CD4-positive, alpha-beta T cell (primary cell): ENCODE measurements at regions of chr10 and their contacts with region 1.

Region 1: GRCh38 chr10:71727738-71728737 is 8.5 kb upstream of the C10orf105 start:
- DNase-seq: peak; percentile 56 to 91 (median 73)
- ATAC-seq: peak; percentile 65
- H3K4me3 ChIP-seq: peak overlapping the region; percentile 10
- H3K4me3 Mint-ChIP-seq: peak overlapping the region; percentile 73
- H3K27ac ChIP-seq: peak overlapping the region; percentile 74 to 88
- H3K27ac Mint-ChIP-seq: peak overlapping the region; percentile 96
- H3K4me1 ChIP-seq: peaks cover 100% of the 10 kb centered on the region
- H3K4me1 Mint-ChIP-seq: peaks cover 79% of the 10 kb centered on the region
- H3K27me3 ChIP-seq: no peaks in the 10 kb centered on the region
- H3K27me3 Mint-ChIP-seq: no peaks in the 10 kb centered on the region
- CTCF ChIP-seq: no peak

Region 2: GRCh38 chr10:71684356-71685173 is 43.5 kb before region 1 on chr10:
- CTCF ChIA-PET with region 1: no interaction called
- POLR2A ChIA-PET with region 1: no interaction called
- intact Hi-C with region 1: no loop called
- DNase-seq: peak in 3 of 14 experiments; percentile 13 to 44 (median 32)
- ATAC-seq: no peak
- H3K4me3 ChIP-seq: no peak overlapping the region
- H3K4me3 Mint-ChIP-seq: no peak overlapping the region
- H3K27ac ChIP-seq: no peak overlapping the region
- H3K27ac Mint-ChIP-seq: no peak overlapping the region
- H3K4me1 ChIP-seq: peaks cover 4% of the 10 kb centered on the region
- H3K4me1 Mint-ChIP-seq: no peaks in the 10 kb centered on the region
- H3K27me3 ChIP-seq: no peaks in the 10 kb centered on the region
- H3K27me3 Mint-ChIP-seq: no peaks in the 10 kb centered on the region
- CTCF ChIP-seq: no peak

Region 3: DNA sequence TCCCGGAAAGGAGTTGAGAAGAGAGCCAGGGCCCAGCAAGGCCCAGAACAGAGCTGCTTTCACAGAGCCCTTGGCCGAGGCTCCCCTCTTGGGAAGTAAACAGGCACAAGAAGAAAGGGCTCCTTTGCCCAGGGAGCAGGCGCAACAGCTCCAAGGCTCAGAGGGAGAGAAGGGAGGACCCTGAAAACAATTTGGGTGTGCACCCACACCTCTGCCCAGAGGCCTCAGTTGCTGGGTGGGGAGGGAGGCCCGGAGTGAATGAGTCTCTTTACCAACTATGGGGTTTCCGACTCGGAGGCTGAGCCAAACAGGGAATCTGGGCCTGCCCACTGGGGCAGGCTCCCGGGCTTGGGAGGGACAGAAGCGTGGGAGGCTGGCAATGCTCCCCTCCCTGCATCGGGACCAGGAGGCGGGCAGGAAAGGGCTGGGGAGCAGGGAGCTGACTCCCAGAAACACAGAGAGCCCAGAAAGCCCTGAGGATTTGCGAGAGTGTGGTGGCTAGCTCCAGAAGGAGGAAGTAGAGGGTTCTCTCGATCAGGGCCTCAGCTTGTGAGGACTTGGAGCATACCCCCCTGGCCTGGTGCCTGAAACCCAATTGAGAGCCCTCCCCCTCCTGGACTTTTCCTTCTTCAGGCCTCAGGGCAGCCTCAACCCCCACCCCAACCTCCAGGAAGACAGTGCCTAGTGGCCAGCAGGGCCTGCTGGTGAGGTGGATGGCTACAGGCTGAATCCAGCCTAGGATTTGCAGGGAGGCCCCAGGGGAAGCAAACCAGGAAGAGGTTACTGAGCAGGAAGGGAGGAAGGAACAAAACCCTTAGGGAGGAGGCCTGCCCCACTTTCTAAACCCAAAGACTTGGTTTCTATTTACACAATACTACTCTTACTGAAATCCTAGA is 14.7 kb before region 1 on chr10:
- CTCF ChIA-PET with region 1: interaction called, 4 read pairs
- POLR2A ChIA-PET with region 1: interaction called, 39 read pairs
- intact Hi-C with region 1: no loop called
- DNase-seq: peak in 5 of 14 experiments; percentile 17 to 64 (median 54)
- ATAC-seq: peak; percentile 32
- H3K4me3 ChIP-seq: peak overlapping the region; percentile 39
- H3K4me3 Mint-ChIP-seq: peak overlapping the region; percentile 80
- H3K27ac ChIP-seq: peak overlapping the region; percentile 74 to 90
- H3K27ac Mint-ChIP-seq: peak overlapping the region; percentile 98
- H3K4me1 ChIP-seq: peaks cover 83% of the 10 kb centered on the region
- H3K4me1 Mint-ChIP-seq: peaks cover 74% of the 10 kb centered on the region
- H3K27me3 ChIP-seq: no peaks in the 10 kb centered on the region
- H3K27me3 Mint-ChIP-seq: no peaks in the 10 kb centered on the region
- CTCF ChIP-seq: no peak

Region 4: DNA sequence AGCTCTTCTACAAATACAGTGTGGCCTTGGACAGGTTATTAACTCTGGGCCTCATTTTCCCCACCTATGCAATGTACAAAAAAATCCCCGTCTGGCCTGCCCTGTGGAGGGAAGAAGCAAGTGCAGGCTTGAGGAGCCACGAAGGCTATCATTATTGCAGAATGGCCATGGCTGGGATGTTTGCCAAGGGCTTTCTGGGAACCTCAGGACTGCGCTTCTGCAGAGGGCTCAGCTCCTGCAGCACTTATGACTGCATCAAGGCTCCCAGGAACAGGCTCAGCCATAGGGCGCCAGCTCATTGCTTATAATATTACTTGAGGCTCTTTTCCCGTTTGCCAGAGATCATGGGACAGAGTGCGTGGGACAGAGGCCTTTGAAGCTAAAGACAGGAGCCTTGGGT is 12.0 kb after region 1 on chr10:
- CTCF ChIA-PET with region 1: interaction called, 3 read pairs
- POLR2A ChIA-PET with region 1: interaction called, 252 read pairs
- intact Hi-C with region 1: no loop called
- DNase-seq: no peak
- ATAC-seq: no peak
- H3K4me3 ChIP-seq: no peak overlapping the region
- H3K4me3 Mint-ChIP-seq: peak overlapping the region; percentile 77
- H3K27ac ChIP-seq: peak overlapping the region; percentile 42 to 51
- H3K27ac Mint-ChIP-seq: peak overlapping the region; percentile 96
- H3K4me1 ChIP-seq: peaks cover 100% of the 10 kb centered on the region
- H3K4me1 Mint-ChIP-seq: peaks cover 100% of the 10 kb centered on the region
- H3K27me3 ChIP-seq: no peaks in the 10 kb centered on the region
- H3K27me3 Mint-ChIP-seq: no peaks in the 10 kb centered on the region
- CTCF ChIP-seq: no peak

Region 5: DNA sequence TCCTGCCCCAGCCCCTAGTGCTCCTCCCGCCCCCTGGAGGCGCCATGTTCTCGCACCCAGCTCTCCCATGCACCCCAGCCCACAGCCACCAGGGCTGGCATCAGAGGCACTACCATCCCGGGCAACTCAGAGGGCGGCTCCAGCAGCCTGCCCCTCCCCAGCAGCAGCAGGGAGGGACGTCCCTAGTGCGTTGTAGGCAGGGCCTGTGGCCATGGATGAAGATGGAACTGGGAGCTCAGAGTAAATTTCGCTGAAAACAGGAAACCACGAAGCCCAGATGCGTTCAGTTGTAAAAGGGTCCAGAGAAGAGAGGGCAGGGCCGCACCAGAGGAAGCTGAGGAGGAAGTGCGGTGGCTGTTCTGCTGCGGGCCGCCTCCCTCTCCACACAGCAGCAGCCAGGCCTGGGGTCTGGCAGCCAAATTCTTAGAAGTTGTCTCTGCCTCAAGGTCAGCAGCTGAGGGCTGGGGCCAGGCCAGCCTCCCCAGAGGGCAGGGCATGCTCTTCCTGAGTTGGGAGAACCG is 20.7 kb after region 1 on chr10:
- CTCF ChIA-PET with region 1: interaction called, 5 read pairs
- POLR2A ChIA-PET with region 1: interaction called, 252 read pairs
- intact Hi-C with region 1: loop called (anchors 1 kb)
- DNase-seq: peak; percentile 59 to 94 (median 74)
- ATAC-seq: peak; percentile 92
- H3K4me3 ChIP-seq: no peak overlapping the region
- H3K4me3 Mint-ChIP-seq: peak overlapping the region; percentile 75
- H3K27ac ChIP-seq: peak overlapping the region; percentile 74 to 75
- H3K27ac Mint-ChIP-seq: peak overlapping the region; percentile 96
- H3K4me1 ChIP-seq: peaks cover 100% of the 10 kb centered on the region
- H3K4me1 Mint-ChIP-seq: peaks cover 97% of the 10 kb centered on the region
- H3K27me3 ChIP-seq: no peaks in the 10 kb centered on the region
- H3K27me3 Mint-ChIP-seq: no peaks in the 10 kb centered on the region
- CTCF ChIP-seq: peak; percentile 47

Region 6: DNA sequence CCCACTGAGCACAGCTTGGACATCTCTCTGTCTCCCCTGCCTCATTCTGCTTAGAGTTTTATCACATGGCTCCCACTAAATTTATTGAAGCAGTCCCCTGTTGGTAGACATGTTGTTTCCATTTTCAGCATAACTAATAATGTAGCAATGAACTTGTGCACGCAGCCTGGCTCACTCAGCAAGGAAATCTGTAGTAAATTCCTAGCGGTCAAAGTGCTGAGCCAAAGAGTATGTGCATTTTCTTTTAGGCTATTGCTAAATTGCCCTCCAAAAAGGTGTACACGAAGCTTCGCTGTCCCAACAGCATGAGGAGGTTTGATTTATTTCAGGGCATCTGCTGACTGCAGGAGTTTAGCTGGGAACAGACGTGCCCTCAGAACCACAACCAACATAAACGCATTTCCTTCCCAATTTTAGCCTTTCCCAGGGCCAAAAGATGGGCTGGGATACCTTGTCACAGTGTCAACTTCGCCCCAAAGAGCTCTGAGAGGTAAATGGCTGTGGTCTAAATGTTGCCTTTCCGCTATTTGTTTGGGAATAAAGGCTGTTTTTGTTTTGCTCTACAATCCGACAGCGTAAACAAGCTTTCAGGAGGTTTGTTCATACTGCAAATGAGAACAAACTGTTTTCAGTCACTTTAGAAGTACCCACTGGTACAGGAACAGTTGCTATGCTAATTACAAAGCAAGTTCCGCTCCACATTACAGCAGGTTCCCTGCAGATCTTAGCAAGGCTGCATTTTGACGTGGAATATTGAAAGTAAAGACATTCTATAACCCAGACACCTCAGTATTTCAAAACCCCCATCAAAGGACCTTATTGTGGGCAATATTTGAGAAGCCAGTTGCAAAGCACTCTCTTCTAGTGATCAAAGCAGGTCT is 28.5 kb after region 1 on chr10:
- CTCF ChIA-PET with region 1: interaction called, 8 read pairs
- POLR2A ChIA-PET with region 1: interaction called, 53 read pairs
- intact Hi-C with region 1: no loop called
- DNase-seq: peak in 4 of 14 experiments; percentile 41 to 75 (median 72)
- ATAC-seq: peak; percentile 82
- H3K4me3 ChIP-seq: peak overlapping the region; percentile 18
- H3K4me3 Mint-ChIP-seq: peak overlapping the region; percentile 66
- H3K27ac ChIP-seq: peak overlapping the region; percentile 86 to 87
- H3K27ac Mint-ChIP-seq: peak overlapping the region; percentile 93
- H3K4me1 ChIP-seq: peaks cover 94% of the 10 kb centered on the region
- H3K4me1 Mint-ChIP-seq: peaks cover 88% of the 10 kb centered on the region
- H3K27me3 ChIP-seq: no peaks in the 10 kb centered on the region
- H3K27me3 Mint-ChIP-seq: no peaks in the 10 kb centered on the region
- CTCF ChIP-seq: no peak

Region 7: GRCh38 chr10:72146071-72146470 is 418.0 kb after region 1 on chr10:
- CTCF ChIA-PET with region 1: no interaction called
- POLR2A ChIA-PET with region 1: no interaction called
- intact Hi-C with region 1: no loop called
- DNase-seq: no peak
- ATAC-seq: no peak
- H3K4me3 ChIP-seq: no peak overlapping the region
- H3K4me3 Mint-ChIP-seq: no peak overlapping the region
- H3K27ac ChIP-seq: no peak overlapping the region
- H3K27ac Mint-ChIP-seq: no peak overlapping the region
- H3K4me1 ChIP-seq: no peaks in the 10 kb centered on the region
- H3K4me1 Mint-ChIP-seq: no peaks in the 10 kb centered on the region
- H3K27me3 ChIP-seq: no peaks in the 10 kb centered on the region
- H3K27me3 Mint-ChIP-seq: no peaks in the 10 kb centered on the region
- CTCF ChIP-seq: no peak